ENCODE measurements at regions of chr2 and their contacts with region 1.

Region 1: DNA sequence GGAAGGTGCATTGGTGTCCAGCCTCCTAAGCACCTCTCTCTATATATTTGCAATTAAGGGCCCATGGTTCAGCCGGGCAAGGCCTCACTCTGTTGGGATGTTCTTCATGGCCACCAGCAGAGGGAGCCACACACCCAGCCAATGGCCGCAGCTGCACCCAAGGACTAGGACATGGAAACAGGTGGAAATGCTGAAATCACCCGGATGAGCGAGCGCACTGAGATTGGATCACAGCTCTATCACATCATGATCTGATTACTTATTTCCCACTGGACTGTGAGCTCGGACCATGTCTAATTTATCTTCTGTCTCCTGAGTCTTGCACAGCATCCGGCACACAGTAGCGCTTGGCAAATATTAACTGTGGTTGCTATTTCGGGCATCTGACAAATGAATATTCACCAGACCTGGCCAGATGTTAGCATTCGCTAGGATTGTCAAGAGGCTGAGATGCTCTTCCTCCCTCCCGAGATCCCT is 31.2 kb downstream of the KIF3C start:
- DNase-seq: peak; percentile 81 to 95 (median 92)

Region 2: GRCh38 chr2:25851740-25852503 is 99.2 kb before region 1 on chr2:
- intact Hi-C with region 1: loop called (anchors 10 kb)
- DNase-seq: peak in 8 of 42 donors; percentile 6 to 68 (median 22)

Measured in head of caudate nucleus (tissue), 42 donors.